ENCODE measurements at regions of chr2 and their contacts with region 1.

Region 1: DNA sequence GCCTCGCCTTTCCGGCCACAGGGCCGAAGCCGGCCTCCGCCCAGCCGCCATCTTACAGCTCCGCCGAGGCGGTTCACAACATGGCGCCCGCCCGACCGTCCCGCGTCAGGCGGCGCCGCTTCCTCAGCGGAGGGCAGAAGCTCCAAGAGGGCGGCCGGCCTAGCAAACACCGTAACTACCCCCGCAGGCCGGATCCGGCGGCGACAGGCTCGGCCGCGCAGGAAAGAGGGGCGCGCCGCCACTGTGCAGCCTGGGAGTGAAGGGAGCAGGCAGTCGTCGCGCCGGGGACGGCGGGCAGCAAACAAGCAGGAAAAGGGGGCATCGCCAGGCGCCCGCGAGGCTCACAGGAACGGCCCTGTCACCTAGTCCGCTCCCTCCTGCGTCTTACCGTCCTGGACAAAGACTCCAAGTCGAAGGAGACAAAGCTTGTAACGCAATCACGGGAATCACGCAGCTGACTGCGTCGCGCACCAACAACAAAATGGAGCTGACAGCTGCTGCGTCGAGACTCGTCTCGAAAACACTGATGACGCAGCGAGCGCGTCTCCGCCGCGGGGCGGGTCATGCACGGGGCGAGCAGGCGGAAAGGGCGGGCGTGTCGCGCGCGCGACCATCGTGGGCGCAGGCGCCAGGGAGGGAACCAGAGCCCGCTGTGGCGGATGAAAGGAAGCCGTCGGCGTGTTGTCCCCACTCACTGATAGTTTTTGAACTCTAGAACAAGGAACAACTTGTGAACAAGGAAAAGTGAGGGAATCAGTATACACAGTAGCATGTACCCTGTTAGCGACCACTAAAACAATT is at the start of gene CLK1:
- DNase-seq: peak; percentile 98
- H3K4me3 Mint-ChIP-seq: peak within 1 kb of the TSS; percentile 98
- H3K27ac Mint-ChIP-seq: peak within 1 kb of the TSS; percentile 100
- H3K4me1 Mint-ChIP-seq: peaks cover 32% of the 10 kb centered on the region
- H3K27me3 Mint-ChIP-seq: no peaks in the 10 kb centered on the region
- total RNA-seq, gene CLK1: 174 to 196 TPM

Region 2: GRCh38 chr2:200525882-200526651 is 338.3 kb before region 1 on chr2 and contains the start of gene SGO2:
- CTCF ChIA-PET with region 1: interaction called, 3 read pairs
- intact Hi-C with region 1: loop called (anchors 2 kb)
- DNase-seq: peak; percentile 98
- H3K4me3 Mint-ChIP-seq: peak within 1 kb of the TSS; percentile 90
- H3K27ac Mint-ChIP-seq: peak within 1 kb of the TSS; percentile 84
- H3K4me1 Mint-ChIP-seq: peaks cover 17% of the 10 kb centered on the region
- H3K27me3 Mint-ChIP-seq: no peaks in the 10 kb centered on the region
- total RNA-seq, gene SGO2: 39.7 to 40.0 TPM

Region 3: DNA sequence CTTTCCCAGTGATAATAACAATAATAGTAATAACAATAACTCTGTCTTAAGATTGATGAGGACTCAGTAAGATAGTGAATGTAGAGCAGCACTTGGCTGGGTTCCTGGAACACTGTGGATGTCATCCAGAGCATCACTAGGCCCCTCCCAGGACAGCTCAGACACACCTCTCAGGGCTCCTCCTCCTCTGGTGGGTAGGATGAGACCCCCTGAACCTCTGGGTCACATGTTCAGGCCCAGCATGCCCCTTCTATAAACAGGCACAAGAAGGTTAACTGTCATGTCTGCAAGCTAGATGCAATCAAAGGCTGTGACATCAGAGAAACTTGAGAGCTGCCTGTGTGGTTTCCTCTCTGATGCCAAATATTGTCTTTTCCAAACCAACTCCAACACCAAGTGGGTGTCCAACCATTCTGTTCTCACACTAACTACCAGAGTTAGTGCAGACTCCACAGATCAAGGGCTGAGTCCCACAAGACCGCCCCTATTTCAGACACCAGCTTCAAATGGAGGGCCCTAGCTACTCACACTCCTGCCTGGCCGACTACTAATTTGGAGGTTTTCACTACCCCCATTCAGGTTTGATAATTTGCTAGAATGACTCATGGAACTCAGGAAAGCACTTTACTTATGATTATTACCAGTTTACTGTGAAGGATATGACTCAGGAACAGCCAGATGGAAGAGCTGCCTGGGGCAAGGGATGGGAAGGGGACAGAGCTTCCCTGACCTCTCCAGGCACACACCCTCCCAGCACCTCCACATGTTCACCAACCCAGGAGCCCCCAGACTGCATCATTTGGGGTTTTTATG is 99.0 kb before region 1 on chr2:
- CTCF ChIA-PET with region 1: no interaction called
- intact Hi-C with region 1: loop called (anchors 2 kb)
- DNase-seq: peak; percentile 70
- H3K4me3 Mint-ChIP-seq: peak overlapping the region; percentile 32
- H3K27ac Mint-ChIP-seq: peak overlapping the region; percentile 92
- H3K4me1 Mint-ChIP-seq: peaks cover 27% of the 10 kb centered on the region
- H3K27me3 Mint-ChIP-seq: no peaks in the 10 kb centered on the region

Region 4: DNA sequence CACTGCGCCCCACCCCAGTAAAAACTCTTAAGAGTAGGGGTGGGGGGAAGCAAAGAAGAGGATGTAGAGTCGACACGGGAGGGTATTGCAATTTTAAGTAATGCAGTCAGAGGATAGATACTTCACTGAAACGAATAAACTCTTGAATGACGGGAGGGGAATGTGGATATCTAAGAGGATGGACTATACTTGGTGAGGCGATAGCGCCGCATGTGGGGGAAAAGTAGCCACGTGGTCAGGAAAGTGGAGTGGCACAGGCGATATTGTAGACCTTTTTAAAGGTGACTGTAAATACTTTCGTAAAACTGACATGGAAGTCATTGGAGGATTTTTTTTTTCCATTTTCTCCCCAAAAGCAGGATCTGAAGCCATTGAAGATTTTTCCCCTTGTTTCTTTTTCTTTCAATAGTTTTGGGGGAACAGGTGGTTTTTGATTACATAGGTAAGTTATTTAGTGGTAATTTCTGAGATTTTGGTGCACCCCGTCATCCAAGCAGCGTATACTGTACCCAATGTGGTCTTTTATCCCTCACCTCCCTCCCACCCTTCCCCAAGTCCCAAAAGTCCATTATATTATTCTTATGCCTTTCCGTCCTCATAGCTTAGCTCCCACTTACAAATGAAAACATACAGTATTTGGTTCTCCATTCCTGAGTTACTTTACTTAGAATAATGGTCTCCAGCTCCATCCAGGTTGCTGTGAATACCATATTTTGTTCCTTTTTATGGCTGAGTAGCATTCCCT is 13.7 kb before region 1 on chr2:
- CTCF ChIA-PET with region 1: no interaction called
- intact Hi-C with region 1: no loop called
- DNase-seq: no peak
- H3K4me3 Mint-ChIP-seq: no peak overlapping the region
- H3K27ac Mint-ChIP-seq: no peak overlapping the region
- H3K4me1 Mint-ChIP-seq: no peaks in the 10 kb centered on the region
- H3K27me3 Mint-ChIP-seq: no peaks in the 10 kb centered on the region

Region 5: GRCh38 chr2:201130524-201131186 is 266.3 kb after region 1 on chr2:
- CTCF ChIA-PET with region 1: interaction called, 6 read pairs
- intact Hi-C with region 1: loop called (anchors 1 kb)
- DNase-seq: peak; percentile 68
- H3K4me3 Mint-ChIP-seq: peak overlapping the region; percentile 76
- H3K27ac Mint-ChIP-seq: peak overlapping the region; percentile 96
- H3K4me1 Mint-ChIP-seq: peaks cover 56% of the 10 kb centered on the region
- H3K27me3 Mint-ChIP-seq: no peaks in the 10 kb centered on the region

Region 6: DNA sequence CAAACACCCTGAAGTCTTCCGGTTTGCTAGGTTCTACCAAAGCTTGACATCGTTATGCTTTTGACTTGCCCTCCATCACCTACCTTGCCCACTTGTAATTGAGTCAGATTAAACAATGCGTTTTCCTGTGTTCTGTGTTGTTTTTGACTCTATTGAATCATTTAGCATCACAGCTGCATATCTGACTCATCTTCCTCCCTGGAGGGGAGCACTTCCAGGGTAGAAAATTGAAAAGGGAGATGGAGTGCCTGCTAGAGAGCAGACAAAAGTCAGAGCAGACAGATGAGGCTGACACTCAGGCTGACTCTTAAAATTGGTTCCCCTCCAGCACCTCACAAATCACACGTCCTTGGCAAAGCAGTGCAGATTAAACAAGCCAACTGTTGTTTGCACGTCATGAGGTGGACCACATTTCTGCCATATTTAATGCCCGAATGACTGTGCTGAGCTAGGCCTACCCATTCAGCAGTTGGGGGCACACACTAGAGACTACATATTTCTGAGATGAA is 831.8 kb after region 1 on chr2:
- CTCF ChIA-PET with region 1: no interaction called
- intact Hi-C with region 1: no loop called
- DNase-seq: no peak
- H3K4me3 Mint-ChIP-seq: no peak overlapping the region
- H3K27ac Mint-ChIP-seq: no peak overlapping the region
- H3K4me1 Mint-ChIP-seq: no peaks in the 10 kb centered on the region
- H3K27me3 Mint-ChIP-seq: no peaks in the 10 kb centered on the region